B cell (primary cell): ENCODE measurements at regions of chr19 and their contacts with region 1.

Region 1: GRCh38 chr19:5313307-5313706 is 27.3 kb downstream of the PTPRS start:
- DNase-seq: peak; percentile 82
- ATAC-seq: peak; percentile 81
- H3K4me3 ChIP-seq: no peak overlapping the region
- H3K4me3 Mint-ChIP-seq: peak overlapping the region; percentile 37
- H3K27ac ChIP-seq: no peak overlapping the region
- H3K27ac Mint-ChIP-seq: peak overlapping the region; percentile 63
- H3K4me1 ChIP-seq: peaks cover 3 to 9% of the 10 kb centered on the region in 2 donors
- H3K4me1 Mint-ChIP-seq: peaks cover 12% of the 10 kb centered on the region
- H3K27me3 ChIP-seq: no peaks in the 10 kb centered on the region
- H3K27me3 Mint-ChIP-seq: peaks cover 8% of the 10 kb centered on the region
- CTCF ChIP-seq: no peak

Region 2: DNA sequence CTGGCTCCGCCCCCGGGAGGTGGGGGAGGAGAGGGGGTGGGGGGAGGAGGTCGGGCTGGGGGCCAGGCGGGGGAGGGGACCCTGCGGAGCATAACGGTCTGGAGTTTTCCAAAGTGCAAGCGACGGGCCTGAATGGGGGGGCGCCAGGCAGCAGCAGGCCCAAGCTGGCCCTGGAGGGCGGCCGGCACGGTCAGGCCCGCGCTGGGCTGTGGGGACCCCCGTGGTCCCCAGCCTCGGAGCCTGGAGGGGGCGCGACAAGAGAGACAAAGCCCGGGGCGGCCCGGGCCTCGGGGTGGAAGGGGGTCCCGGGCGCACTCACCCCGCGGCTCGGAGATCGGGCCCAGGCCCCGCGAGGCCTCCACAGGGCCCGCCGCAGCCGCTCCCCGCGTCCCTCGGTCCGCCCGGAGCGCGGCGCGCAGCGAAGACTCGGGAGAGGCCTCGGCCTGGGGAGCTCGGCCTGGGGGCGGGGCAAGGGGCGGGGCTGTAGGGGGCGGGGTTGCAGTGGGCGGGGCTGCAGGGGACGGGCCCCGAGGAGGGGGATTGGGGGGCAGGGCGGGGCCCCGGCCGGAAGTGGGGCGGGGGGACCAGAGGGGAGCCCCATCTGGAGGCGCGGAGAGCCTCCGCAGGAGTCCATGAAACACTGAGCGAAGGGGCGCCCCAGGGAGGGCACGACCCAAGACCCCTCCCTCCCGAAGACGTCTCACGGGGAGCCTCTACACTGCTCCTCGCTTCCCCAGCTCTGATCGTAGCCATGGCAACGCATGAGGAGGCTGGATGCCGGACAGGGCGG is 20.3 kb before region 1 on chr19:
- CTCF ChIA-PET with region 1: no interaction called
- POLR2A ChIA-PET with region 1: interaction called, 4 read pairs
- intact Hi-C with region 1: loop called (anchors 2 kb)
- DNase-seq: peak; percentile 75
- ATAC-seq: peak; percentile 68
- H3K4me3 ChIP-seq: peak overlapping the region in 4 of 5 experiments; percentile 35 to 65 (median 53)
- H3K4me3 Mint-ChIP-seq: peak overlapping the region; percentile 76
- H3K27ac ChIP-seq: no peak overlapping the region
- H3K27ac Mint-ChIP-seq: peak overlapping the region; percentile 46
- H3K4me1 ChIP-seq: peaks cover 22 to 30% of the 10 kb centered on the region in 2 donors
- H3K4me1 Mint-ChIP-seq: peaks cover 23% of the 10 kb centered on the region
- H3K27me3 ChIP-seq: peaks cover 0 to 28% (median 1%) of the 10 kb centered on the region in 4 experiments
- H3K27me3 Mint-ChIP-seq: peaks cover 18% of the 10 kb centered on the region
- CTCF ChIP-seq: no peak

Region 3: GRCh38 chr19:5651361-5651760 is 338.1 kb after region 1 on chr19:
- CTCF ChIA-PET with region 1: no interaction called
- POLR2A ChIA-PET with region 1: no interaction called
- intact Hi-C with region 1: no loop called
- DNase-seq: no peak
- ATAC-seq: no peak
- H3K4me3 ChIP-seq: no peak overlapping the region
- H3K4me3 Mint-ChIP-seq: no peak overlapping the region
- H3K27ac ChIP-seq: no peak overlapping the region
- H3K27ac Mint-ChIP-seq: no peak overlapping the region
- H3K4me1 ChIP-seq: no peaks in the 10 kb centered on the region
- H3K4me1 Mint-ChIP-seq: peaks cover 1% of the 10 kb centered on the region
- H3K27me3 ChIP-seq: no peaks in the 10 kb centered on the region
- H3K27me3 Mint-ChIP-seq: no peaks in the 10 kb centered on the region
- CTCF ChIP-seq: no peak